ENCODE measurements at regions of chr1 and their contacts with region 1.

Region 1: DNA sequence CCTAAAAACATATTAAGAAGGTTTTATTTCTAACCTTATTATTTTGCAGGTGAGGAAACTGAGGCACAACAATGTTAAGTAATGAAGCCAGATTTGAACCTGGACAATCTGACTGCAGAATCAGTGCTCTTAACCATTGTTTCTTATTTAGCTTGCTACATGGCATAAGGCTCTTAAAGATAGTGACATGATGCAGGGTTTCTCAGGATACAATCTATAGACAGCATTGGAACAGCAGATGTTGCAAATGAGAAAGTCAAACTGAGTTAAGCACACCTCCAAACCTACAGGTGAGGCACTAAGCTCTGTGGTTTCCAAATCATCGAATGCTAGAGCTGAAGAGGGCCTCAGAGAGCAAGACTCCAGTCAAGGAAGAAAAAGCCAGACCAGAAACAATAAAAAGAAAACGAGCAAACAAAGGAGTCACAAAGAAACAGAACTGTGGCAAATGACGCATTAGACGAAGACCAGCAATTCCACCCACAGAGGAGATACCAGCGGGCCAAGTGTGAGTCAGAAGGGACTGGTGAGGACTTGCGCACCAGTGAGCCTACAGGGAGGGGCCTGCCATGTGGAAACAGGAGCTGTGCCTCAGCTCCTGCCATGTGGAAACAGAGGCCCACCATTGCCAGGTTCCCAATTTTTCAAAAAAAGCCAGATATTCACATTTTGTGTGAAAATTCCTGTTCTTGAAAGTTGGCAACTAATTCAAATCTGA is 14.4 kb downstream of the CD58 start:
- DNase-seq: peak; percentile 88
- ATAC-seq: peak; percentile 92
- H3K4me3 Mint-ChIP-seq: no peak overlapping the region
- H3K27ac Mint-ChIP-seq: peak overlapping the region; percentile 87
- H3K4me1 Mint-ChIP-seq: peaks cover 73% of the 10 kb centered on the region
- H3K27me3 Mint-ChIP-seq: no peaks in the 10 kb centered on the region

Region 2: DNA sequence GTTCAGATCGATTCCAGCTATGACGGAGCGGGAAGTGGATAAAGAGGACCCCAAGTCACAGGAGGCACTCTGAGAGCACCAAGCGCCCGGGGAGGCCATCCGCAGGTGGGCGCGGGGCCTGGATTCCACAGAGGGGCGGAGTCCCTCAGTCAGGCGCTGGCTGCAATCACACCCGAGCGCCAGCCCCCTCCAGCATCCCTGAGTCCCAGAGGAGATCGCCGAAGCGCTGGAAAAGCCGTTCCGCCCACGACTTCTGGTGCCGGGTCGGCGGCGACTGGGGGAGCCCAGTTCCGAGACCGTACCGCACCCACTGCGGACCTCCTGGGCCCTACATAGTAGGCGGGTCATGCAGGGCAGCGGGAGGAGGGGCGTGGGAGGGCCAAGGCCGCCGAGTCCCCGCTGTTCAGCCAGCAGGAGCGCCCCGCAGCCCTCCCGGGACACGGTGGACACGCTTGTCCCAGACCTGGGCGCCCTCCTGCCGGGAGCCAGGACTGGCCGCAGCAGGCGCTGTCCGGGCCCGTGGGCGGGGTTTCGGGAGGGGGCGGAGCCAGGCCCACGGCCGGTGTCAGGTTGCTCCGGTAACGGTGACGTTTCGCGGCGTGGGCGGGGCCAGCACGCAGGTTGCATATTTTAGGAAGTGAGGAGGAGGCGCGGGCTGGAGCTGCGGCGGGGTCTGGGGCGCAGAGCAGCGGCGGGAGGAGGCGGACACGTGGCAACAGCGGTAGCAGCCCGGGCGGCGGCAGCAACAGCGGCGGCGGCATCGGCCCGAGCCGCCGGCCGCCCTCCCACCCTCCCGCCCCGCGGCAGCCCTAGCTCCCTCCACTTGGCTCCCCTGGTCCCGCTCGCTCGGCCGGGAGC is 183.6 kb before region 1 on chr1 and contains the start of gene ATP1A1:
- CTCF ChIA-PET with region 1: no interaction called
- POLR2A ChIA-PET with region 1: no interaction called
- intact Hi-C with region 1: loop called (anchors 1 to 5 kb)
- DNase-seq: peak; percentile 99
- ATAC-seq: peak; percentile 55
- H3K4me3 Mint-ChIP-seq: peak within 1 kb of the TSS; percentile 93
- H3K27ac Mint-ChIP-seq: peak within 1 kb of the TSS; percentile 98
- H3K4me1 Mint-ChIP-seq: peaks cover 33% of the 10 kb centered on the region
- H3K27me3 Mint-ChIP-seq: no peaks in the 10 kb centered on the region
- total RNA-seq, gene ATP1A1: 247 to 257 TPM

Region 3: GRCh38 chr1:116504308-116505156 is 51.9 kb before region 1 on chr1:
- CTCF ChIA-PET with region 1: interaction called, 4 read pairs
- POLR2A ChIA-PET with region 1: interaction called, 3 read pairs
- intact Hi-C with region 1: loop called (anchors 1 to 5 kb)
- DNase-seq: peak; percentile 89
- ATAC-seq: peak; percentile 86
- H3K4me3 Mint-ChIP-seq: peak overlapping the region; percentile 31
- H3K27ac Mint-ChIP-seq: peak overlapping the region; percentile 94
- H3K4me1 Mint-ChIP-seq: peaks cover 60% of the 10 kb centered on the region
- H3K27me3 Mint-ChIP-seq: no peaks in the 10 kb centered on the region

Region 4: GRCh38 chr1:116514708-116515525 is 41.5 kb before region 1 on chr1:
- CTCF ChIA-PET with region 1: interaction called, 6 read pairs
- POLR2A ChIA-PET with region 1: interaction called, 15 read pairs
- intact Hi-C with region 1: loop called in 1 of 2 experiments (anchors 1 kb)
- DNase-seq: peak; percentile 78
- ATAC-seq: peak; percentile 94
- H3K4me3 Mint-ChIP-seq: peak overlapping the region; percentile 39
- H3K27ac Mint-ChIP-seq: peak overlapping the region; percentile 85
- H3K4me1 Mint-ChIP-seq: peaks cover 56% of the 10 kb centered on the region
- H3K27me3 Mint-ChIP-seq: no peaks in the 10 kb centered on the region

Region 5: DNA sequence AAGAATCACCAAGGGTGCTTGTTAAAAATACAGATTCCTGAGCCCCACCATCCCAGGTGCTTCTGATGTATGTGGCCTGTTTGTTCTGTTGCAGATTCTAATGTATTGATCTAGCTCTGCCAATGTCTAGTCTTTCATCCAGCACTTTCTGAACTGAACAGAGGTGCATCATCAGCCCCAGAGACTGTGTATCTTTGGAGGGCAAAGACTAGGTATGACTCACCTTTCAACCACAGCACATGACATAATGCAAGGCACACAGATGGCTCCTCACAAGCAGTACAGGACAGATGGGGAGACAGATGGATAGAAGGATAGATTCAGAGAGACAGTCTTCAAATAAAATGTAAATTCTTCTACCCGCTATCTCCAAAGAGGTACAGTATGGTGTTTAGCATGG is 17.9 kb before region 1 on chr1:
- CTCF ChIA-PET with region 1: interaction called, 7 read pairs
- POLR2A ChIA-PET with region 1: interaction called, 4 read pairs
- intact Hi-C with region 1: loop called in 1 of 2 experiments (anchors 1 kb)
- DNase-seq: peak; percentile 66
- ATAC-seq: peak; percentile 97
- H3K4me3 Mint-ChIP-seq: no peak overlapping the region
- H3K27ac Mint-ChIP-seq: peak overlapping the region; percentile 34
- H3K4me1 Mint-ChIP-seq: peaks cover 38% of the 10 kb centered on the region
- H3K27me3 Mint-ChIP-seq: no peaks in the 10 kb centered on the region

Region 6: GRCh38 chr1:116544588-116545358 is 11.7 kb before region 1 on chr1:
- CTCF ChIA-PET with region 1: interaction called, 5 read pairs
- POLR2A ChIA-PET with region 1: interaction called, 8 read pairs
- intact Hi-C with region 1: loop called in 1 of 2 experiments (anchors 1 kb)
- DNase-seq: peak; percentile 44
- ATAC-seq: peak; percentile 61
- H3K4me3 Mint-ChIP-seq: peak overlapping the region; percentile 67
- H3K27ac Mint-ChIP-seq: peak overlapping the region; percentile 96
- H3K4me1 Mint-ChIP-seq: peaks cover 41% of the 10 kb centered on the region
- H3K27me3 Mint-ChIP-seq: no peaks in the 10 kb centered on the region

Region 7: DNA sequence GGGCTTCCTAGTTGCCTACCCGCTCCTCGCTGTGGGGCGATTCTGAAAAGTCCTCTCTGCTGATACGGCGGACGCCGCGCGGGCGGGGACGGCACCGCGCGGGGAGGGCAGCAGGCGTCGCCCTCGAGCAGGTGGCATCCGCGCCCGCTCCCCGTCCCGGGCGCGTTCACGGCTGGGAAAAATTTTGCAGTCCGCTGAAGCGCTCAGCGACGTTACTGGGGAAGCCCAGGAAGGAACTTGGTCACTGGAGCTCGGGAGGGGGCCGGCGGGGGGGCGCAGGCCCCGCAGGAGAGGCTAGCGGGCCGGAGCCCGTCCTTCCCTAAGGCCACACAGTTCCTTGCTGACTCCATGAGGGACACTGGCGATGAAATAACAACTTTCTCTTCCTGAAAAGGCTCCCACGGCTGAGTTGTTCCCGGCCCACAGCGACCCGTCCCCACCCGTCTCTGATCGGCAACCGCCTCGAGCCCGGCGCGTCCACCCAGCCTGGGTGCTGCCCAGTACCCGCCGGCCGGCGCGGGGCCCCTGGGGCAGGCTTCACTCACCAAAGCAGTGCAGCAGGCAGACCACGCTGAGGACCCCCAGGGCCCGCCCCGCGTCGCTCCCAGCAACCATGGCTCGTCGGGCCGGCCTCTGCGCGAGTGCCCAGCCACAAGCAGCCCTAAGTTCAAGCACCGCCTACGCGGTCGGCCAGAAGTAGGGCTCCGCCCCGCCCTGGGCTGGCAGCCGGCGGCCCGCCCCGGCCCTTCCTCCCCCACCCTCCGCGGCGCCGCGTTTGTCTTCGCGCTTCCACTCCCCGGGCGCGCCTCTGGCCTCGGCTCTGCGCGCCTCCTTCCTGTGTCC is 14.1 kb after region 1 on chr1 and contains the start of gene CD58:
- CTCF ChIA-PET with region 1: interaction called, 11 read pairs
- POLR2A ChIA-PET with region 1: interaction called, 14 read pairs
- intact Hi-C with region 1: loop called in 1 of 2 experiments (anchors 1 kb)
- DNase-seq: peak; percentile 93
- ATAC-seq: peak; percentile 77
- H3K4me3 Mint-ChIP-seq: peak within 1 kb of the TSS; percentile 91
- H3K27ac Mint-ChIP-seq: peak within 1 kb of the TSS; percentile 87
- H3K4me1 Mint-ChIP-seq: peaks cover 64% of the 10 kb centered on the region
- H3K27me3 Mint-ChIP-seq: peaks cover 8% of the 10 kb centered on the region
- total RNA-seq, gene CD58: 12.4 to 16.0 TPM

Region 8: DNA sequence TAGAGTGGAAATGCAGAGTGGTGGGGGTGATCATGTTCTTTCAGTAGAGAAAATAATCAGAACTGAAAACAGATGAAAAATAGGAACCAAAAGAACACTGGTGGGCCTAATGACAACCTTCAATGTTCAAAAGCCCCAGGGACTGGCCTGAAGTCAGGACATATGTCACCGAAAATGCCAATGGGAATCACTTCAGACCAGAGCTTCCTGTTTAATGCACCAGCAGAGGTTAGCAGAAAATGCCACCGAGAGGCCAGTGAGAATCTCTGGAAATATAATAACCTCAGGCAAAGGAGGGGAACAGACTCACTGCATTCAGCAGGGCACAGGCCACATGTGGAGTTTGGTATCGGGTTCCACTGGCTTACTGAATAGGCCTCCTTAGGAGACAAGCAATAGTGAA is 30.3 kb after region 1 on chr1:
- CTCF ChIA-PET with region 1: no interaction called
- POLR2A ChIA-PET with region 1: no interaction called
- intact Hi-C with region 1: no loop called
- DNase-seq: no peak
- ATAC-seq: no peak
- H3K4me3 Mint-ChIP-seq: no peak overlapping the region
- H3K27ac Mint-ChIP-seq: no peak overlapping the region
- H3K4me1 Mint-ChIP-seq: peaks cover 18% of the 10 kb centered on the region
- H3K27me3 Mint-ChIP-seq: no peaks in the 10 kb centered on the region